Prostate gland (tissue), 2 donors: ENCODE measurements at regions of chr9 and their contacts with region 1.

Region 1: DNA sequence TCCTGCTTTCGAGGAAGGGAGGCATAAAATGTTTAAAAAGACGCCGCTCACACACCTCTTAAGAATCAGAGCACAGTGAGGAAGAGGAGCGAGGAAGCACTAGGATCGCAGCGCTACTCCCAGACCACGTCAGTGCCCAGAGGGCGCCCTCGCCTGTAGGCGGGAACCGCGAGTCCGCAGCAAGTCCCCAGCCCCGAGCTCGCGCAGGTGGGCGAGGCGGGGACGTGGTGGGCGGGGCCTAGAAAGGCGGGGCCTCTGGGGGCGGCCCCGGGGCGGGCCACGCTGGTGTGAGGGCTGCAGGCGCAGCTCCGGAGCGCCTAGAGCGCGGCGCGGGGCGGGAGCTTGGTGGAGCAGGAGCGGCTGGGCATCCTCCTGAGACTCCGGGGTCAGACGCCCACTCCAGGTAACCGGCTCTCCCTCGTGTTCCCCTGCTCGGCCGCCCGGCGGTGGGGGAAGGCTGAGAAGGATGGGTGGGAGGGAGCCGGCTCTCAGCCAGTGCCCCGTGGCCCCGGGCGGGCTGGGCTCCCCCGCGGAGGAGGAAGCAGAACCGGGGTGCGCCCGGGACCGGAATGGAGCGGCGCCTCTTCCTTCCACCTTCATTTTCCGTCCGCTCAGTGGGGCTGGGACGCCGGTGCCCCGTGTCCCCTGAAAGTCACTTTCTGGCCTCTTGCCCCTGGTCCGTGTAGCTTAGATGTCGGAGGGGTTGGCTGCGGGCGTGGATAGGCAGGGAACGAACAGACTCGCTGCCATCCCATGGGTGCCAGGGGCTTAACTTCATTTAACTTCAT is at the start of gene GCNT1:
- DNase-seq: peak; percentile 90
- H3K4me3 ChIP-seq: peak within 1 kb of the TSS; percentile 62 to 67
- H3K27ac ChIP-seq: peak within 1 kb of the TSS; percentile 69 to 72
- H3K4me1 ChIP-seq: no peaks in the 10 kb centered on the region
- H3K27me3 ChIP-seq: no peaks in the 10 kb centered on the region
- CTCF ChIP-seq: peak in 3 of 4 experiments; percentile 58 to 69 (median 64)
- POLR2A ChIP-seq: peak; percentile 91
- total RNA-seq, gene GCNT1: 3.1 to 3.8 TPM

Region 2: DNA sequence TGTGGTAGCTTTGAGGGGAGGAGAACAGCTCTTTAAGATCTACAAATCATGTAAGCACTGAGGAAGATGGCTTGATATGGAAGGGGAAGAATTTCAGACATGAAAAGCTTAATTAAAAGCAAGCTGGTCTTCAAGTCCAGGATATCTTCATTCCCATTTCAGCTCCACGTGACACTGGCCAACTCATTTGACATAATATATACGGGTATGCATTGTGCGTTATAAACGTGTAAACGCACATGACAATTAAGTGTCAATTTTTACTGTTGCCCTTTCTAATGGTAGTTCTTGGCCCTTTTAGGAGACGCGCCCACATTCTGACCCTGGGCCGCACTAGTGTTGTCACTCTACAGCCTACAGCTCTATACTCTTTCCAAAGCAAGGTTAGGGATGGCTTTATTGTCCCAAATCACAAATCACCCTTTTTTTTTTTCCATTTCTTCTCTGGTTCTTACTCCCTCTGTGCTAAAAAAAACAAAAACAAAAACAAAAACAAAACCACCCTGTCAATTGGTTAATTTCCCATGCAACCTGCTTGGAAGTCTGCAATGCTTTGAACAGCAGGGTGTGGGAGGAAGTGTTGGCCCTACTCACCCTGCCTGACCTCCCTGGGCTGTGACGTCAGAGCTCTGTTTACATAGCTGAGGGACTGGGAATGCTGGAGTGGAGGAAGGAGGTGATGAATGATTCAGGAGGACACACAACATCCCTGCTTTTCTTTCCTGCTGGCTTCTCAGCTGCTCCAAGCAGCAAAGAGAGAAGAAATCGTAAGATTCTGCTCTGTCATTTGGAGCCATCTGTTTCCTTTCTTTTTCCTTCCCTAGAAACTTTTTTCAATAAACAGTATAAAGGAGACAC is 84.2 kb before region 1 on chr9:
- intact Hi-C with region 1: loop called (anchors 10 kb)
- DNase-seq: no peak
- H3K4me3 ChIP-seq: no peak overlapping the region
- H3K27ac ChIP-seq: no peak overlapping the region
- H3K4me1 ChIP-seq: no peaks in the 10 kb centered on the region
- H3K27me3 ChIP-seq: no peaks in the 10 kb centered on the region
- CTCF ChIP-seq: no peak
- POLR2A ChIP-seq: no peak